ENCODE measurements at regions of chr1 and their contacts with region 1.

Region 1: DNA sequence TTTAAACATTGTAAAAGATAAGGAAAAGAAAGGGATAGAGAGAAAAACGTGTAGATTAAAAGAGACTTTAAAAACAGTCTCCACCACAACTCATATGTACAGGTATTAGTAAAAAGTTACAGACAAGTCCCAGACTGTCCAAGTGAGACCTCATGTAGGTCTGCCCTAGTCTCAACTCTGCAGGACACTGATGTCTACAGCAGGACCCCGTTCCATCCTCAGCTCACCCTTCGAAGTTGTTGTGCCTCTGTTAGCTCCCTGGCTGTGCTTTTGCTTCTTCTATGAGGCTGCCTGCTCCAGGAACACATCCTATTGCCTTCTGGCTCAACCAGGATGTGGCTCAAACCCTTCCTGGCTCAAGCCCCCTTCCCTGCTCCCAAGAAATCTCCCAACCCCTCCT is 72.9 kb upstream of the FBXO28 start:
- DNase-seq: peak in 1 of 4 experiments; percentile 17
- ATAC-seq: peak; percentile 50
- H3K4me3 ChIP-seq: no peak overlapping the region
- H3K27ac ChIP-seq: no peak overlapping the region
- H3K4me1 ChIP-seq: peaks cover 0 to 9% of the 10 kb centered on the region in 2 experiments; a peak in 3 of 5 replicates
- H3K27me3 ChIP-seq: no peaks in the 10 kb centered on the region
- CTCF ChIP-seq: no peak
- EP300 ChIP-seq: no peak
- POLR2A ChIP-seq: no peak
- RAD21 ChIP-seq: no peak

Region 2: DNA sequence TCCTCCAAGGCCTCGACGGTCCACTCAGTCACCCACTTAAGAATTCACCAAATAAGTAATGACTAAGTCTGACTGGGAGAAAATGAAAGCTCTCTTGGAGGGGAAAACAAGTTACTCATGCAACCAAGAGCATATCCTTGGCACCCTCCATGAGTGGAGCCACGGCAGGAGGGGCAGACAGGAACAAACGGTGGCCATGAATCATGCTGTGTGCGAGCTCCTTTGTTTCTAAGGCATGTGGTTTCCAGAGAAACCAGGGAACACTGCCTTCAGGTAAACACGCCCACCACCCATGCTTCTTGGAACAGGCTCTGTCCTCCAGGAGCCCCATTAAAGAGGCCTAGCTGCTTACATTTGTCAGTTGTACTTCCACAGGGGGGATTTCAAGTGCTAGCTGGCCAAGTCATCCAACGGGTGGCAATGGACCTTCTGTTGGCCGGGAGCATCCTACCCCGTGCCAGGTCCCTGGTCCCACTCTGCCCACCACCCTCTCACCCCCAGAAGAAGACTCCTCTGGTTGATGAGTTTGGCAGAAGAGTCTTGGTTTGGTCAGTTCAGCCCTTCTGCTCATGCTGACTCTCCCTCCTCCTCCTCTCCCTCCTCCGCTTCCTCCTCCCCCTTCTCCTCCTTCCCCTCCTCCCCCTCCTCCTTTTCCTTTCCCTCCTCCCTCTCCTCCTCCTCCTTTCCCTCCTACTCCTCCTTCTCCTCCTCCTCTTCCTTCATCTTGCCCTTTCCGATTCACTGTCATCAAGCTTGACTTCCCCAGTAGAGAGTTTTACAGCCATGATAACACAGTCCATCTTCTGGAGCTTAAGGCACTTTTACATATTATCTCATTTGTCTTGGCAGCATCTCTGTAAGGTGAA is 540.2 kb before region 1 on chr1:
- CTCF ChIA-PET with region 1: no interaction called
- POLR2A ChIA-PET with region 1: no interaction called
- in situ Hi-C with region 1: no loop called
- intact Hi-C with region 1: no loop called
- DNase-seq: no peak
- ATAC-seq: no peak
- H3K4me3 ChIP-seq: no peak overlapping the region
- H3K27ac ChIP-seq: no peak overlapping the region
- H3K4me1 ChIP-seq: no peaks in the 10 kb centered on the region; a peak in 1 of 5 replicates
- H3K27me3 ChIP-seq: peaks cover 2 to 44% of the 10 kb centered on the region in 2 experiments; a peak in 2 of 5 replicates
- CTCF ChIP-seq: no peak
- EP300 ChIP-seq: no peak
- POLR2A ChIP-seq: no peak
- RAD21 ChIP-seq: no peak

Region 3: GRCh38 chr1:224052772-224053171 is 11.7 kb after region 1 on chr1:
- CTCF ChIA-PET with region 1: no interaction called
- POLR2A ChIA-PET with region 1: interaction called, 11 read pairs
- in situ Hi-C with region 1: no loop called
- intact Hi-C with region 1: no loop called
- DNase-seq: no peak
- ATAC-seq: no peak
- H3K4me3 ChIP-seq: no peak overlapping the region
- H3K27ac ChIP-seq: no peak overlapping the region
- H3K4me1 ChIP-seq: no peaks in the 10 kb centered on the region; a peak in 2 of 5 replicates
- H3K27me3 ChIP-seq: no peaks in the 10 kb centered on the region
- CTCF ChIP-seq: no peak
- EP300 ChIP-seq: no peak
- POLR2A ChIP-seq: no peak
- RAD21 ChIP-seq: no peak